ENCODE measurements at regions of chr14 and their contacts with region 1.

Region 1: GRCh38 chr14:69726761-69727511 is 40.0 kb upstream of the SRSF5 start:
- DNase-seq: peak; percentile 64 to 90 (median 80)
- ATAC-seq: peak; percentile 87
- H3K4me3 ChIP-seq: peak overlapping the region; percentile 49
- H3K4me3 Mint-ChIP-seq: peak overlapping the region; percentile 79
- H3K27ac ChIP-seq: no peak overlapping the region
- H3K27ac Mint-ChIP-seq: peak overlapping the region; percentile 17
- H3K4me1 ChIP-seq: peaks cover 17% of the 10 kb centered on the region
- H3K4me1 Mint-ChIP-seq: peaks cover 24% of the 10 kb centered on the region
- H3K27me3 ChIP-seq: no peaks in the 10 kb centered on the region
- H3K27me3 Mint-ChIP-seq: no peaks in the 10 kb centered on the region
- CTCF ChIP-seq: peak; percentile 99

Region 2: GRCh38 chr14:69242311-69243224 is 484.4 kb before region 1 on chr14:
- CTCF ChIA-PET with region 1: no interaction called
- POLR2A ChIA-PET with region 1: no interaction called
- intact Hi-C with region 1: loop called in 1 of 2 experiments (anchors 5 kb)
- DNase-seq: peak in 13 of 14 experiments; percentile 7 to 74 (median 37)
- ATAC-seq: peak; percentile 77
- H3K4me3 ChIP-seq: no peak overlapping the region
- H3K4me3 Mint-ChIP-seq: no peak overlapping the region
- H3K27ac ChIP-seq: no peak overlapping the region
- H3K27ac Mint-ChIP-seq: no peak overlapping the region
- H3K4me1 ChIP-seq: no peaks in the 10 kb centered on the region
- H3K4me1 Mint-ChIP-seq: peaks cover 6% of the 10 kb centered on the region
- H3K27me3 ChIP-seq: no peaks in the 10 kb centered on the region
- H3K27me3 Mint-ChIP-seq: no peaks in the 10 kb centered on the region
- CTCF ChIP-seq: peak; percentile 91

Region 3: DNA sequence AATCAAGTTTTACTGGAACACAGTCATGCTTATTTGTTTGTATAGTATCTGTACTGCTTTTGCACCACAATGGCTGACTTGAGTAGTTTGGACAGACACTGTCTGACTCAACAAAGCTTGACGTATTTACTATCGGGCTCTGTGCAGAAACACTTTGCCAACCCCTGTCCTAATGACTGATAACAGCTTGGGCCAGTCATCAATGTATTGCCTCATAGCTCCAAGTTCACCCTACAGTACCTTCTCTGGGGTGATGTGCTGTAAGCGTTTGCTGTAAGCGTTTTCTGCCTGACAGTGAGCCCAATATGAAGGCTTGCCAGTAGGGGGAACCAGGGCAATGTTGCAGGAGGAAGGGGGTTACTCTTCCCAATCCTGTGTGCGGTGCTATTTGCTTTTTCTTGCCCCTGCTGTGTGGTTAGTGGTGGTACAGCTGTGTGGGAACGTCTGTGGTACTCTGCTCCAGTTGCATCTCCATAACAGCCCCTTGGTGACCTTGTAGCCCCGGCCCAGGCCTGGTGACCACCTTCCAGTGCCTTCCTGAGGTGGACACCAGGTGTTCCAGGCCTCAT is 146.8 kb before region 1 on chr14:
- CTCF ChIA-PET with region 1: interaction called, 20 read pairs
- POLR2A ChIA-PET with region 1: interaction called, 3 read pairs
- intact Hi-C with region 1: loop called (anchors 1 kb)
- DNase-seq: peak in 2 of 14 experiments; percentile 8 to 24
- ATAC-seq: no peak
- H3K4me3 ChIP-seq: no peak overlapping the region
- H3K4me3 Mint-ChIP-seq: no peak overlapping the region
- H3K27ac ChIP-seq: no peak overlapping the region
- H3K27ac Mint-ChIP-seq: no peak overlapping the region
- H3K4me1 ChIP-seq: no peaks in the 10 kb centered on the region
- H3K4me1 Mint-ChIP-seq: no peaks in the 10 kb centered on the region
- H3K27me3 ChIP-seq: peaks cover 6 to 7% of the 10 kb centered on the region in 2 experiments
- H3K27me3 Mint-ChIP-seq: peaks cover 25% of the 10 kb centered on the region
- CTCF ChIP-seq: no peak

Region 4: DNA sequence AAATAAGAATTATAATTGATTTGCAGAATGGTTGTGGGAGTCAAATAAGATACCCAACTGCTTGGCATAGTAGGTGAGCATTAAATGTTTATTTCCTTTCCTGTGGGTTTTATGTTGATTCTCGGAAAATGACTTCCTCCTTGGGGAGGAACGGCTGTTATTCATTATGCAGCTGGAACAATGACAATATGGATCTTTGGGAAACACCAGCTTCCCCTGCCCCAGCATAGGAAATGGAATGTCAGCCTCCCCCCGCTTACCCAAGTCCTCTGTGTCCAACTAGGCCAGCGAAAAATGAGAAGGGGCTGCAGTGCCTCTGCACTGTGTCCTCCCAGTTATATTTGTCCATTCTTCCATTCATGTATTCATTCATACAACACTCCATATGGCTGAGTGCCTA is 140.5 kb before region 1 on chr14:
- CTCF ChIA-PET with region 1: interaction called, 20 read pairs
- POLR2A ChIA-PET with region 1: interaction called, 3 read pairs
- intact Hi-C with region 1: loop called (anchors 1 kb)
- DNase-seq: no peak
- ATAC-seq: no peak
- H3K4me3 ChIP-seq: no peak overlapping the region
- H3K4me3 Mint-ChIP-seq: no peak overlapping the region
- H3K27ac ChIP-seq: no peak overlapping the region
- H3K27ac Mint-ChIP-seq: no peak overlapping the region
- H3K4me1 ChIP-seq: no peaks in the 10 kb centered on the region
- H3K4me1 Mint-ChIP-seq: no peaks in the 10 kb centered on the region
- H3K27me3 ChIP-seq: no peaks in the 10 kb centered on the region
- H3K27me3 Mint-ChIP-seq: no peaks in the 10 kb centered on the region
- CTCF ChIP-seq: no peak

Region 5: DNA sequence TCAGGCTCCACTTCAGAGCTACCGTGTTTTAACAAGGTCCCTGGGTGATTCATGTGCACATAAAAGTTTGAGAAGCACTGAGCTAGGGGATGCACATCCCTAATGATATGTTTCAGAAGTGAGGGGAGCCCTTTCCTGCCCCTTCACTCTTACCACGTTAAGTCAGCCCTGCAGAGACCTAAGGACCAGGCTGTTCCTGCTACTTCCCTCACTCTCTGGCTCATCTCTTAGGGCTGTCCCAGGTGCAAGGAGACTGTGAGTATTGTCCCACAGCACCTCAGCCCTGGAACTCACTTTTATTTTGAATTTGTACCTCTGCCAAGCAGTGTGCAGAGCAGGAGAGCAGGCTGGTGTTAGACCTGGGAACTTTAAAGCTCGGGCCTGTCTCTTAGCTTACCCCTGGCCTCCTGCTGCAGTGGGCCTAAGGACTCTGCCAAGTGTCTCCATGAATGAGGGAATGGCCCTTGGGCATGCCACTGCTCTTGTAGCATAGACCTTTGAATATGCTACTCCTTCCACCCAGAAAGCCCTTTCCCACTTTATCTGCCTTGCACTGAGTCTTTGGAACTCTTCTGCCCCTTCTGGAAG is 126.5 kb before region 1 on chr14:
- CTCF ChIA-PET with region 1: interaction called, 7 read pairs
- POLR2A ChIA-PET with region 1: no interaction called
- intact Hi-C with region 1: loop called (anchors 1 to 5 kb)
- DNase-seq: no peak
- ATAC-seq: no peak
- H3K4me3 ChIP-seq: no peak overlapping the region
- H3K4me3 Mint-ChIP-seq: no peak overlapping the region
- H3K27ac ChIP-seq: no peak overlapping the region
- H3K27ac Mint-ChIP-seq: no peak overlapping the region
- H3K4me1 ChIP-seq: peaks cover 4% of the 10 kb centered on the region
- H3K4me1 Mint-ChIP-seq: no peaks in the 10 kb centered on the region
- H3K27me3 ChIP-seq: no peaks in the 10 kb centered on the region
- H3K27me3 Mint-ChIP-seq: no peaks in the 10 kb centered on the region
- CTCF ChIP-seq: no peak

Region 6: DNA sequence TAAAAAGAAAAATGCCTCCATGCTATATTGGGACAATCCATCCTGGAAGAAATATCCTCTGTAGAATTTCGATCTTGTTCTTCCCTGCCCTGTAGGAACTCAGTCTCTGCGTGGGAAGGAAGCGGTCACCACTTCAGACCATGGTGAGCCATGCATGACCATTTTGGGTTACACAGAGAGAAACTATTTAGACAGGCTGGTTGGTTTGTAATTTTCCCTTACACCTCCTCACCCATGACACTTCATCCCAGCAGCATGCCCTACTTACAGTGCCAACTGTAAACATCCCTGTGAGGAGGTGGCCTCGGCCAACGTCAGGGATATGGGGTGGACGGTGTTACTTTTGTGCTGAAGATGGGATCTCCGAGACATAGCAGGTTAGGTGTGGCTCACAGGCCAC is 273.7 kb after region 1 on chr14:
- CTCF ChIA-PET with region 1: no interaction called
- POLR2A ChIA-PET with region 1: no interaction called
- intact Hi-C with region 1: no loop called
- DNase-seq: no peak
- ATAC-seq: no peak
- H3K4me3 ChIP-seq: no peak overlapping the region
- H3K4me3 Mint-ChIP-seq: no peak overlapping the region
- H3K27ac ChIP-seq: no peak overlapping the region
- H3K27ac Mint-ChIP-seq: no peak overlapping the region
- H3K4me1 ChIP-seq: no peaks in the 10 kb centered on the region
- H3K4me1 Mint-ChIP-seq: no peaks in the 10 kb centered on the region
- H3K27me3 ChIP-seq: no peaks in the 10 kb centered on the region
- H3K27me3 Mint-ChIP-seq: peaks cover 7% of the 10 kb centered on the region
- CTCF ChIP-seq: no peak

Region 7: GRCh38 chr14:70027785-70028428 is 301.0 kb after region 1 on chr14:
- CTCF ChIA-PET with region 1: no interaction called
- POLR2A ChIA-PET with region 1: no interaction called
- intact Hi-C with region 1: loop called (anchors 2 to 5 kb)
- DNase-seq: peak in 13 of 14 experiments; percentile 20 to 63 (median 41)
- ATAC-seq: no peak
- H3K4me3 ChIP-seq: no peak overlapping the region
- H3K4me3 Mint-ChIP-seq: no peak overlapping the region
- H3K27ac ChIP-seq: no peak overlapping the region
- H3K27ac Mint-ChIP-seq: no peak overlapping the region
- H3K4me1 ChIP-seq: no peaks in the 10 kb centered on the region
- H3K4me1 Mint-ChIP-seq: no peaks in the 10 kb centered on the region
- H3K27me3 ChIP-seq: peaks cover 0 to 3% of the 10 kb centered on the region in 2 experiments
- H3K27me3 Mint-ChIP-seq: peaks cover under 1% of the 10 kb centered on the region
- CTCF ChIP-seq: peak; percentile 48

Measured in CD4-positive, alpha-beta T cell (primary cell).